Activated naive CD4-positive, alpha-beta T cell treated with anti-CD3 and anti-CD28 coated beads for 36 hours (primary cell): ENCODE measurements at regions of chr1 and their contacts with region 1.

Region 1: DNA sequence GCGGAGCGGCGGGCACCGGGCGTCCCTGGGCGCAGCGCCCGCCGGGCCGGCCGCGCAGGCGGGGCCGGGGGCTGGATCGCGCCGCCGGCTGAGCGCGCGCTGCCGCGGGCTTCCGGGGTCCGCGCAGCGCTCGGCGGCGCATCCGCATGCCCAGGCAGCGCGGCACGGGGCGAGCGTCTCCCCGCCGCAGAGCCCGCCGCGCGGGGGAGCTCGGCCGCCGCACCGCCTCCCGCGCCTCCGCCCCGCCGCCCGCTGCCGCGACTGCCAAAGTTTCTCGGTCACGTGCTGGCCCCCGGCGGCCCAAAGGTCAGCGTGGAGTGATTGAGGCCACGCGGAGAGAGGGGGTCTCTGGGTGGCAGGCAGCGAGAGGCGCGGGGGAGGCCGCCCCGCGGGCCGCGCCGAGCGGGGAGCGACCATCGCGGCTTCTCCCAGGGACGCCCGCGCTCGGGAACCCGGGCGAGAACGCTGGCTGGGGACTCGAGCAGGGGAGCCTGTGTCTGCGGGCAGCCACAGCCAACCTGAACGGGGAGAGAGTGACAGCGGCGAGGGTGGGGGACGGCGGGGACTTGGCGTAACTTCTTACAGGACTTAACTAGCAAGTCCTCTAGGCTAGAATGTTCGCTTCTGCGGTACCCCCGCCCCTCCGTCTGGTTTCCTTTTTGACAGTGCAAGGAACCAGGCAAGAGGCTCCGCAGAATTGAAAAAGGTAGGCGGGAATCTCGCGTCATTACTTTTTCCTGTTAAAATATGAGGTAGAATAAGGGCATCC is at the start of gene ILDR2:
- DNase-seq: peak; percentile 84
- H3K4me3 Mint-ChIP-seq: peak within 1 kb of the TSS; percentile 91
- H3K27ac Mint-ChIP-seq: peak within 1 kb of the TSS; percentile 90
- H3K4me1 Mint-ChIP-seq: peaks cover 36% of the 10 kb centered on the region
- H3K27me3 Mint-ChIP-seq: peaks cover 10% of the 10 kb centered on the region
- total RNA-seq, gene ILDR2: 9.1 to 10.5 TPM

Region 2: DNA sequence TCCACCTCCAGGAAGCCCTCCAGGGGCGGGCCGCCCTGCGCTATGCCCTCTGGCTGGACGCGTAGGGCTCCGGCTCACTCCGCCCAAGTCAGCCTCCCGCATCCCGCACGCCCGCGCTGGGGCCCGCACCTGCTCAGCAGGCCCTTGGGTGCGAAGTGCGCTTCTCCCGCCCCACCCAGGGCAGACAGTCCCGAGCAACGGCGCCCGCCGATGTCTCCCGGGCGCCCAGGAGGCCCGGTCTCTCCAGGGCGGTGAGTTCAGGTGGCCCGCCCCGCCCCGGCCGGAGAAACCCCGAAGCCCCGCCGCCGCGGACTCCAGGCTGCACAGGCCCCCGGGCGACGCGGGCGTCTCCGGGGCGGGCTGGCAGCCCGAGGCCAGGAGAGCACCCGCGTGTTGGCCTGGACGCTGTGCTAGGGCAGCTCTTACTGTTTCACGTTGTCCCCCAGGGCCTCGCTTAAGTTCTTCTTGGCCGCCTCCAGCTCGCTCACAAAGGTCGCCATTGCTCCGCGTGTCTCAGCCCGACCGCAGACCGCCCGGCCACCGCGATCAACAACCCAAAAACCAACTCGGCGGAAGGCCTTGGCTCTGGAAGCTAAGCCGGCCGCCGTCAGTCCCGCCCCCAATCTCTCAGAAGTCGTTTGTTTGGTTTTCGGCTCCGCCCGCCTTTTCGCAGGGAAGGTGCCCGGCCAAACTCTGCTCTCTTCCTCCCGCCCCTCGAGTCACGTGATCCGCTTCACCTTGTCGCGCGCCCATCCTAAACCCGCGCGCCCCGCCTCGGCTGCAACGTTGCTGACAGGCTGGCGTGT is 99.6 kb before region 1 on chr1 and contains the start of gene TADA1:
- CTCF ChIA-PET with region 1: no interaction called
- intact Hi-C with region 1: loop called (anchors 2 kb)
- DNase-seq: peak; percentile 100
- H3K4me3 Mint-ChIP-seq: peak within 1 kb of the TSS; percentile 99
- H3K27ac Mint-ChIP-seq: peak within 1 kb of the TSS; percentile 97
- H3K4me1 Mint-ChIP-seq: peaks cover 37% of the 10 kb centered on the region
- H3K27me3 Mint-ChIP-seq: no peaks in the 10 kb centered on the region
- total RNA-seq, gene TADA1: 19.6 to 19.9 TPM

Region 3: DNA sequence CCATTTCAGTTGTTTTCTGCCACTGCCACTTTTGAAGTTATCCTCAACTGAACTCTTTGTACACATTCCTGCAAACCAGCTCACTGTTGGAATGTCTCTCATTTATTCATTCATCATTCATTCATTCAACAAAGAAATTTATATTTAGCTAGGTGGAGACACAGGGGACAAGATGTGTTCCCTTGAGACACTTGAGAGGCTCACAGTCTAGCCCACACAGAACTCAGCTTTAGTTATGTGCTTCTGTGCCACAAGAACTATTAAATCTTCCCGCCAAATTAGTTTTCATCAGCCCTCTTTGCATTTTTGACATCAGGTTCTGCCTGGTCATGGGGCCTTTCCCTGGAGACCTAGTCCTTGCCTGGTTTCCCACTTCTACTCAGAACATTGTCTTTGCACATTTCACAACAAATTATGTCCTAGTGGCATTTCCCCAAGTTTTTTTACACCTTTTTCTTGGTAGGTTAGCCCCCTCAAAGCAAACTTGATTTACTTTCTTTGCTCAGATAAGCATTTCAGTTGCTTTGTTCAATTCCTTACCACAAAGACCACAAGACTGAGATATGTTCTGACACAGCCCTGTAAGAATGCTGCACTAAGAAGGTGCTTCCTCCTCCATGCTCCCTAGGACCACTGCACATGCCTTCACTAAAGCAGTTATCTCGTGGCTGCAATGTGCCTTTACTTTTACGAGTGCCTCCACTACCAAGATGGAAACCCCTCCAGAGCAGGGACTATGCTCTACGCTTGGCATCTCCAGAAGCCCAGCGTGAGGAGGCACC is 31.2 kb before region 1 on chr1:
- CTCF ChIA-PET with region 1: no interaction called
- intact Hi-C with region 1: loop called (anchors 2 kb)
- DNase-seq: no peak
- H3K4me3 Mint-ChIP-seq: no peak overlapping the region
- H3K27ac Mint-ChIP-seq: no peak overlapping the region
- H3K4me1 Mint-ChIP-seq: peaks cover 24% of the 10 kb centered on the region
- H3K27me3 Mint-ChIP-seq: peaks cover 22% of the 10 kb centered on the region

Region 4: DNA sequence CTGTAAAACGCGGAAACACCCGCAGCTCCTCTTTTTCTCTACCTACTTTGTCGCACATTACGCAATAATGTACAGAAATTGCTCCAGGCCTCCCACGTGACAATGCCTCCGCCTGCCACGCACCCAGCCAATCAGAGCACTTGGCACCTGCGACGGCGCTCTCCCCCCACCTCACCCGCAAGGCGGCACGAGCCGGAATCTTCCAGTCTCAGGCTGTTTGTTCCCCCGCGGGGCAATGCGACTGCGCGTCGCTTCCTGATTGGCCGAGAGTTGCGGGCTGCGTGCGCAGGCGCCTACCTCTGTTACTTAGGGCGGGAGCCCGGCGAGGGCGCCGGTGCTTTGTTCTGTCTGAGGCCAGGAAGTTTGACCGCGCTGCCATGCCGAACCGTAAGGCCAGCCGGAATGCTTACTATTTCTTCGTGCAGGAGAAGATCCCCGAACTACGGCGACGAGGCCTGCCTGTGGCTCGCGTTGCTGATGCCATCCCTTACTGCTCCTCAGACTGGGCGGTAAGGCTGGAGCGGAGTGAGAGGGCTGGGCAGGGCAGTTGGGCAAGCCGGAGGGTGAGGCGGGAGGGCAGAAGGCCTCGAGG is 13.5 kb after region 1 on chr1 and contains the start of gene MAEL:
- CTCF ChIA-PET with region 1: no interaction called
- intact Hi-C with region 1: no loop called
- DNase-seq: no peak
- H3K4me3 Mint-ChIP-seq: no peak within 1 kb of the TSS
- H3K27ac Mint-ChIP-seq: no peak within 1 kb of the TSS
- H3K4me1 Mint-ChIP-seq: no peaks in the 10 kb centered on the region
- H3K27me3 Mint-ChIP-seq: peaks cover 7% of the 10 kb centered on the region
- total RNA-seq, gene MAEL: 0.24 to 0.35 TPM

Region 5: GRCh38 chr1:167043752-167044488 is 68.4 kb after region 1 on chr1:
- CTCF ChIA-PET with region 1: no interaction called
- intact Hi-C with region 1: loop called (anchors 1 kb)
- DNase-seq: peak; percentile 88
- H3K4me3 Mint-ChIP-seq: peak overlapping the region; percentile 75
- H3K27ac Mint-ChIP-seq: peak overlapping the region; percentile 67
- H3K4me1 Mint-ChIP-seq: peaks cover 16% of the 10 kb centered on the region
- H3K27me3 Mint-ChIP-seq: peaks cover 3% of the 10 kb centered on the region

Region 6: DNA sequence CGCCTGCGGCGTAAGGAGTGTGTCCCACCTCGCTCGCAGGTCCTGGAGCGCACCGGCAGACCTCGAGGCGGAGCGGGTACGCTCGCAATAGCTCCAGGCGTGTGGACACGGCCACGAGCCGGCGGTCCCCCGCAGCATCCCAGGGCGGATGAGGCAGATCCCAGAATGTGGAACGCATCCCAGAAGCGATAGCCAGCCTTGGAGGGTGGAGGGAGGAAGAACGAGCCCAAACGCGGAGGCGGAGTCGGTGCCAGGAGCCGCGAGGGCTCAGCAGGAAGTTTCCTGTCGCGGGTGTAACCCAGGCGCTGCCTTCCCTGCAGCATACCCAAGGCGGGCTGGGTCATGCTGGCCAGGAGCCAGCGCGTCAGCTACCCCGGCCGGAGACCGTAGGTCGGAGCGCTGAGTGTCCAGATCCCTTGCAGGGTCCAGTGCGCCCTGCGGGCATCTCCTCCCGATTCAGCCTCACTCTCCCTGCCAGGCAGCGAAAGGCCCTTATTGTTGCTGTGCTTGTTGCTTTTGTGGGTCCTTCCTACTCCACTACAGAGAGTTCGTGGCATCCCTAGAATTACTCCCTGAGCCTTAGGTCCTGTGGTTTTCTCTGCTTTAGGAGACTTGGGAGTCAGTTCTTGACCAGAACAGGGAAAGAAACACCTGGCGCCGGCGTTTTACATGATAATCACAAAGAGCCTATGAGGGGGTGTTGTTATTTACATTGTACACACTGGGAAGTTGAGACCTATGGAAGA is 146.0 kb after region 1 on chr1:
- CTCF ChIA-PET with region 1: no interaction called
- intact Hi-C with region 1: loop called (anchors 5 kb)
- DNase-seq: peak; percentile 58
- H3K4me3 Mint-ChIP-seq: peak overlapping the region; percentile 81
- H3K27ac Mint-ChIP-seq: no peak overlapping the region
- H3K4me1 Mint-ChIP-seq: peaks cover 3% of the 10 kb centered on the region
- H3K27me3 Mint-ChIP-seq: peaks cover 2% of the 10 kb centered on the region